IMR-90 (cell line): ENCODE measurements at regions of chr17 and their contacts with region 1.

Region 1: GRCh38 chr17:17001874-17002520 is 30.1 kb upstream of the TNFRSF13B start:
- DNase-seq: peak; percentile 42
- ATAC-seq: peak; percentile 99
- H3K4me3 ChIP-seq: no peak overlapping the region
- H3K27ac ChIP-seq: no peak overlapping the region
- H3K4me1 ChIP-seq: no peaks in the 10 kb centered on the region
- H3K27me3 ChIP-seq: peaks cover 16% of the 10 kb centered on the region
- CTCF ChIP-seq: peak; percentile 94
- POLR2A ChIP-seq: no peak
- RAD21 ChIP-seq: peak; percentile 97

Region 2: DNA sequence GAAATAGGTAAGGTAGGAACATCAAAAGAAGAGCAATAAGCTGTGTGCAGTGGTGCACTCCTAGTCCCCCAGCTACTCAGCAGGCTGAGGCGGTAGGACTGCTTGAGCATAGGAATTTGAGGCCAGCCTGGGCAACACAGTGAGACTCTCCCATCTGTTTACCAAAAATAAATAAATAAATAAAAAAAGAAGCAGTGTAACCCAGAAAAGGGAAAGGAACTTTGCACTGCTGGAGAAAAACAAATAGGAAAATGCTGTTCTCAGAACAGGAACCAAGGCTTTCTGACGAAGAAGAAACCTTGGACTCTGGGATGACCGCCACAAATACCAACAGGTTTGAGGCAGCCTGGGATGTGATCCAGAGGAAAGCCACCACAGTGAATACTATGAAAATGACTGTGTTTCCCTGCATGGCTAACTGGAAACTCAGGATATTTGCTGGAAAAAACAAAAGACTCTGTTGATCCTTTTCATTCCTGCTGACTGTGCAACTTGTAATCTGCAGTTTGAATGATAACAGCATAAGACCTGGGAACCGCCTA is 961.2 kb before region 1 on chr17:
- CTCF ChIA-PET with region 1: no interaction called
- POLR2A ChIA-PET with region 1: no interaction called
- dilution Hi-C with region 1: no loop called
- in situ Hi-C with region 1: no loop called
- intact Hi-C with region 1: no loop called
- DNase-seq: peak; percentile 87
- ATAC-seq: peak; percentile 76
- H3K4me3 ChIP-seq: no peak overlapping the region
- H3K27ac ChIP-seq: peak overlapping the region; percentile 7; the same call in 1 of the 2 replicates
- H3K4me1 ChIP-seq: no peaks in the 10 kb centered on the region
- H3K27me3 ChIP-seq: no peaks in the 10 kb centered on the region
- CTCF ChIP-seq: no peak
- POLR2A ChIP-seq: no peak
- RAD21 ChIP-seq: no peak

Region 3: DNA sequence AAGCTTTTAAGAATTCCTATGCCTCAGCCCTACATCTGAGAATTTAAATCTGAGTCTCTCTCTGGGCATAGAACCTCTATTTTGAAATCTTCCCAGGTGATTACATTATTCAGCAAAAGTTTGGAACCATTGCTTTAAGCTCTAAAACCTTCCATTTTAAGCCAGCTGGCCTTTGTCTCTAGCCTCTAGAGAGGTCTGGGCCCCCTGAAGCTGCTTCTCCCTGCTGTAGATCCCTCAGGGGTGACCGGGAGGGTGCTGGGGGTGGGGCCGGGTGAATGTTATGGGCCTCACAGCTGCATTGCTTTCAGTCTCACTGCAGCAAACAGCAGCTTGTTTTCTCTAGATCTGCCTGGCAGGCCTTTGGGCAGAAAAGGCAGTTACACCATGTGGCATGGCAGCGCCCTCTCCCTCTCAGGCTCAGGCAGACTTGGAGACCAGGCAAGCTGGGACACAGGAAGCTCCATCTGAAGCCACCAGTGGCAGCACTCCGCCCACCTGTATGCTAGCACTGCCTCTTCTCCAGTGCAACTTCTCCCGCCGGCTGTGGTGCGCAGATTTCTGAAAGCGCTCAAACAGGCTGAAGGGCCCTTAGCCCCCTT is 106.6 kb after region 1 on chr17:
- CTCF ChIA-PET with region 1: no interaction called
- POLR2A ChIA-PET with region 1: no interaction called
- dilution Hi-C with region 1: no loop called
- in situ Hi-C with region 1: no loop called
- intact Hi-C with region 1: loop called (anchors 10 kb)
- DNase-seq: no peak
- ATAC-seq: peak; percentile 57
- H3K4me3 ChIP-seq: no peak overlapping the region
- H3K27ac ChIP-seq: peak overlapping the region; percentile 35; the same call in 1 of the 2 replicates
- H3K4me1 ChIP-seq: peaks cover 31% of the 10 kb centered on the region
- H3K27me3 ChIP-seq: no peaks in the 10 kb centered on the region
- CTCF ChIP-seq: no peak
- POLR2A ChIP-seq: no peak
- RAD21 ChIP-seq: no peak

Region 4: GRCh38 chr17:17196776-17197175 is 194.8 kb after region 1 on chr17:
- CTCF ChIA-PET with region 1: no interaction called
- POLR2A ChIA-PET with region 1: no interaction called
- dilution Hi-C with region 1: no loop called
- in situ Hi-C with region 1: no loop called
- intact Hi-C with region 1: loop called (anchors 5 kb)
- DNase-seq: no peak
- ATAC-seq: no peak
- H3K4me3 ChIP-seq: no peak overlapping the region
- H3K27ac ChIP-seq: no peak overlapping the region
- H3K4me1 ChIP-seq: peaks cover 12% of the 10 kb centered on the region
- H3K27me3 ChIP-seq: no peaks in the 10 kb centered on the region
- CTCF ChIP-seq: no peak
- POLR2A ChIP-seq: no peak
- RAD21 ChIP-seq: no peak

Region 5: GRCh38 chr17:17496189-17497064 is 494.4 kb after region 1 on chr17 and contains the start of gene RASD1:
- CTCF ChIA-PET with region 1: no interaction called
- POLR2A ChIA-PET with region 1: no interaction called
- dilution Hi-C with region 1: no loop called
- in situ Hi-C with region 1: no loop called
- intact Hi-C with region 1: no loop called
- DNase-seq: peak; percentile 81
- ATAC-seq: peak; percentile 93
- H3K4me3 ChIP-seq: peak within 1 kb of the TSS; percentile 63
- H3K27ac ChIP-seq: peak within 1 kb of the TSS; percentile 6; the same call in 1 of the 2 replicates
- H3K4me1 ChIP-seq: peaks cover 7% of the 10 kb centered on the region; the same call in 1 of the 2 replicates
- H3K27me3 ChIP-seq: peaks cover 3% of the 10 kb centered on the region; the same call in 1 of the 2 replicates
- CTCF ChIP-seq: peak; percentile 94
- POLR2A ChIP-seq: peak; percentile 98
- RAD21 ChIP-seq: peak; percentile 82
- total RNA-seq, gene RASD1: 0.54 and 1.1 TPM in 2 replicates

Region 6: DNA sequence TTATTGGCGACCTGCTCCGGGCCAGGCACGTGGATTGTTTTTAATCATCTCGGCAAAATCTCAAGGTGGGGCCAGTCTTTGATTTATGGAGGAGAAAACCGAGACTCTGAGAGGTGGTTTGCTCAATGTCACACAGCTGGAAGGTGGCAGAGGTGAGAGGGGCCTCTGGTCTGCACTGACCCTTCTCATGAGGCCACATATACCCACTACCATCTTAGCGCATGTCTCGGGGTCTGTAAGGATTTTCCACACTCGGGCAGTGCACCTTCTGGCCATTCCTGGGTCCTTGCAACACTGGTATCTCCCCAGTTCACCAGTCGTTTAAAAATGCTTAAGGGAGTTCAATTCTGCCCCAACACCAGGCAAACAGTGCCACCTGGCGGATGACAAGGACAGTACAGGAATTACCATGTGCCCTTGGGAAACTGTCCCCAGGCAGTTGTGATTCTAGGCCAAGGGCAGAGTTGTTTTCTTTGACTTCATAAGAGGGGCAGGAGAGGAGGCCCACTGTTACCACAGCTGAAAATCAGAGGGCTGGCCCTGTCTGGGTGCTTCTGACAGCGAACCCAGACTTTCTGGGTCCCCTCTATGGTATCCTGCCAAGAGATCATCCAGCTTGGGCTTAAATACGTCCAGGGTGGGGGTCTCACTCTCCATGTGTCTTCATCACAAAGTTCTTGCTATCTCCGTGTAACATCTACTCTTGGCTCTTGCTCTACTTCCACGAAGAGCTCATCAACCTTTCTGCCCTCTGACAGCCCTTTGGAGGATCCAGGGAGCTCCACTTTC is 639.8 kb after region 1 on chr17:
- CTCF ChIA-PET with region 1: no interaction called
- POLR2A ChIA-PET with region 1: no interaction called
- dilution Hi-C with region 1: no loop called
- in situ Hi-C with region 1: loop called (anchors 25 kb)
- intact Hi-C with region 1: loop called (anchors 5 kb)
- DNase-seq: peak; percentile 76
- ATAC-seq: peak; percentile 99
- H3K4me3 ChIP-seq: no peak overlapping the region
- H3K27ac ChIP-seq: no peak overlapping the region
- H3K4me1 ChIP-seq: no peaks in the 10 kb centered on the region
- H3K27me3 ChIP-seq: peaks cover 6% of the 10 kb centered on the region
- CTCF ChIP-seq: peak; percentile 96
- POLR2A ChIP-seq: no peak
- RAD21 ChIP-seq: peak; percentile 96